PC-3 (cell line): ENCODE measurements at regions of chr5 and their contacts with region 1.

Region 1: GRCh38 chr5:142655339-142656267 is 30.3 kb downstream of the FGF1 start:
- DNase-seq: peak; percentile 77
- ATAC-seq: peak; percentile 97
- H3K4me3 ChIP-seq: no peak overlapping the region
- H3K27ac ChIP-seq: no peak overlapping the region
- H3K4me1 ChIP-seq: 0 out of 2 replicates have a peak, but pooled peaks cover 4% of the 10 kb centered on the region
- H3K27me3 ChIP-seq: no peaks in the 10 kb centered on the region
- CTCF ChIP-seq: peak; percentile 92

Region 2: GRCh38 chr5:142611154-142611553 is 44.4 kb before region 1 on chr5:
- CTCF ChIA-PET with region 1: interaction called, 5 read pairs
- POLR2A ChIA-PET with region 1: no interaction called
- intact Hi-C with region 1: loop called (anchors 1 kb)
- DNase-seq: peak; percentile 68
- ATAC-seq: peak; percentile 93
- H3K4me3 ChIP-seq: no peak overlapping the region
- H3K27ac ChIP-seq: no peak overlapping the region
- H3K4me1 ChIP-seq: peaks cover 8% of the 10 kb centered on the region; the same call in 1 of the 2 replicates
- H3K27me3 ChIP-seq: no peaks in the 10 kb centered on the region
- CTCF ChIP-seq: peak; percentile 68

Region 3: DNA sequence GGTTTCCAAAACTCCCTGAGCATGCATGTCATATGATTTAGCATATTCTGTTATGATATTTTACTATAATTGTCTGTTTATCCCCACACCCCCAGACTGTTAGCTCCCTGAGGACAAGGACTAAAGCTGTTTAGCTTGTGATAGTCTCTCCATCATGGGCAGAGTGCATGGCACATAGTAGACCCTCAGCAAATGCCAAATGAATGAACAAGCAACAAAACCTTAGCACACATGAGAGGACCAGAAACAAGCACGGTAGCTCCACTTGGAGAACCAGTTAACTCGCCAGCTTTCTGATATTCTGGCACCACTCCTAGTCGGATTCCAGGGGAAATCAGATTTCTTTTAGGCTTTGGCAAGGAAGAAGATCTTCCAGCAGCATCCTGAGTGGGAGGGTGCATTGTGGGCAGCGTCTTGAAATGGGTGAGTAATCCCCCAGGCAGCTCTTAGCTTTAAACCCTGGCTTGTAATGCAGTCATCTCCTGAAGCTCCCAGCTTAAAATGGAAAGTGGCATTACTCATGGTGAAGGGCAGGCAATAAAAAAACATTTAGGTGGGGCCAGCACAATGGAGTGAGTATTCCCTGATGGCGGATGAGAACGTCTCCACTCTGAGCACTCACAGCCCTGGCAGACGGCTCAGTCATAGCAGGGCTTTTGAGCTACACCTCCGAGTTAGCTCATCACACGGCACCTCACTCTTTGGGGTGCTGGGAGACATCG is 10.8 kb before region 1 on chr5:
- CTCF ChIA-PET with region 1: interaction called, 13 read pairs
- POLR2A ChIA-PET with region 1: no interaction called
- intact Hi-C with region 1: no loop called
- DNase-seq: peak; percentile 97
- ATAC-seq: peak; percentile 93
- H3K4me3 ChIP-seq: peak overlapping the region; percentile 29
- H3K27ac ChIP-seq: peak overlapping the region; percentile 100
- H3K4me1 ChIP-seq: peaks cover 28% of the 10 kb centered on the region
- H3K27me3 ChIP-seq: no peaks in the 10 kb centered on the region
- CTCF ChIP-seq: no peak

Region 4: GRCh38 chr5:142699184-142699720 is 43.6 kb after region 1 on chr5:
- CTCF ChIA-PET with region 1: interaction called, 18 read pairs
- POLR2A ChIA-PET with region 1: no interaction called
- intact Hi-C with region 1: loop called (anchors 1 kb)
- DNase-seq: peak; percentile 92
- ATAC-seq: peak; percentile 99
- H3K4me3 ChIP-seq: no peak overlapping the region
- H3K27ac ChIP-seq: no peak overlapping the region
- H3K4me1 ChIP-seq: peaks cover 15% of the 10 kb centered on the region
- H3K27me3 ChIP-seq: no peaks in the 10 kb centered on the region
- CTCF ChIP-seq: peak; percentile 88

Region 5: DNA sequence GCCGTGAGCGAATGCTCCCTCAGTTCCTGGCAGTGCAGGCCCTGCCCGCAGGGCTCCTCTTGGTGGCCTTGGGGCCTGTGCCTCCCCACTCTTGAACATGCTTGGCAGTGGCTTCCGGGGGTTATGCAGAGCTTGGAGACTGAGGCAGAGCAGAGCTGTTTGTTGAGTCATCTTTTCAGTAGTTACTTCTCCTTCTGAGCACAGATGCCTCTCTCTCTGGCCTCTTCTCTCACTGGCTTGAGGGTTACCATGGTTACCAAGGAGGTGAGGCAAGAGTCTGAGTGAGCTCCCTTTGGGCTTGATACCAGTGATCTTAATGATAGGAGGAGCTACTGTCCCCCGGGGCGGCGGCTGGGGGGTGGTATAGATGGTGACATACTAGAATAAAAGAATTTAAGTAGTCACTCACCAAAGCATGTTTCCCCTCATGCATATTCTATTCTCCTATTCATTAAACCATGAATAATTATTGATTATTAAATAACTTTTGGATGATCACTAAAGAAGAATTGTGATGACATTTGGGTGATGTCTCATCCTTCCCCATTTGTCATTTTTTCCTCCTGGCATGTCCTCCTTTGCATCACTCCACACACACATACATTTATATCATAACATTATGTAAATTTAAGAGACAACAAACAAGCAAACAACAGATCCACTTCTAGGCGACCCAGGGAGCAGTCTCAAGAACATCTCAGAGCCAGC is 225.6 kb after region 1 on chr5:
- CTCF ChIA-PET with region 1: no interaction called
- POLR2A ChIA-PET with region 1: no interaction called
- intact Hi-C with region 1: loop called (anchors 5 kb)
- DNase-seq: no peak
- ATAC-seq: no peak
- H3K4me3 ChIP-seq: no peak overlapping the region
- H3K27ac ChIP-seq: no peak overlapping the region
- H3K4me1 ChIP-seq: peaks cover 4% of the 10 kb centered on the region; the same call in 1 of the 2 replicates
- H3K27me3 ChIP-seq: no peaks in the 10 kb centered on the region
- CTCF ChIP-seq: no peak

Region 6: DNA sequence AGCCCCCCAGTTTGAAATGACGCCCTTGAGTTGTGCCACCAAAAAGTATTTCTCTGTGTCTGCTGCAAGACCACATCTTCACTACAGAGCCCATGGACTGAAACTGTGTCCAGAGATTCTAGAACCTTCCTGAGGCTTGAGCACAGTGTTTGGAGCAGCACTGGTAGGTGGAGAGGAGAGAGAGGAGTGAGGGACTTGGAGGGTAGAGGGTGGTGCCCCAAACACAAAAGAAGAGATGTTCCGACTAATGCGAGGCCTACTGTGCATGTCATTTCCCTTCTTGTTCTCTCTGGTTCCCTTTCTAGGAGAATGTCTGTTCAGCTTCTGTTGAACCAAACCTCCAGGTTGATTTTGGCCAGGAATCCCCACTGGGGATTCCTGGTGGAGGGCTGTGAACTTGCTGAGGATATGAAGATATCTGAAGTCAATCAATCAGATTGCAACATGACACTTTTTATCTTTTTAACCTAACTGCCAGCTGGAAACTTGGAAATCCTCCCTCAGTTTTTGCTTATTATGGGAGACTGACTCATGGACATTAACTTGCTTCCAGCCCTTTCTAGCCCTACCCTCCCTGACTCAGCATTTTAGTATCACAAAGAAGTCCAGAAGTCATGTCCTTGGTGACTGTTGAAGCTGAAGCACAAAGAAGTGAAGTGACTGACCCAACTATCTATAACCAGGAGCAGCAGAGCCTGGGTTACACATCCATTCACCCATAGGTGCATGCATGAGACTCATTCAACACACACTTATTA is 593.4 kb after region 1 on chr5:
- CTCF ChIA-PET with region 1: no interaction called
- POLR2A ChIA-PET with region 1: no interaction called
- intact Hi-C with region 1: no loop called
- DNase-seq: peak; percentile 78
- ATAC-seq: peak; percentile 44
- H3K4me3 ChIP-seq: no peak overlapping the region
- H3K27ac ChIP-seq: peak overlapping the region; percentile 74
- H3K4me1 ChIP-seq: peaks cover 49% of the 10 kb centered on the region
- H3K27me3 ChIP-seq: no peaks in the 10 kb centered on the region
- CTCF ChIP-seq: no peak